Endothelial cell of umbilical vein (primary cell): ENCODE measurements at regions of chr9 and their contacts with region 1.

Region 1: DNA sequence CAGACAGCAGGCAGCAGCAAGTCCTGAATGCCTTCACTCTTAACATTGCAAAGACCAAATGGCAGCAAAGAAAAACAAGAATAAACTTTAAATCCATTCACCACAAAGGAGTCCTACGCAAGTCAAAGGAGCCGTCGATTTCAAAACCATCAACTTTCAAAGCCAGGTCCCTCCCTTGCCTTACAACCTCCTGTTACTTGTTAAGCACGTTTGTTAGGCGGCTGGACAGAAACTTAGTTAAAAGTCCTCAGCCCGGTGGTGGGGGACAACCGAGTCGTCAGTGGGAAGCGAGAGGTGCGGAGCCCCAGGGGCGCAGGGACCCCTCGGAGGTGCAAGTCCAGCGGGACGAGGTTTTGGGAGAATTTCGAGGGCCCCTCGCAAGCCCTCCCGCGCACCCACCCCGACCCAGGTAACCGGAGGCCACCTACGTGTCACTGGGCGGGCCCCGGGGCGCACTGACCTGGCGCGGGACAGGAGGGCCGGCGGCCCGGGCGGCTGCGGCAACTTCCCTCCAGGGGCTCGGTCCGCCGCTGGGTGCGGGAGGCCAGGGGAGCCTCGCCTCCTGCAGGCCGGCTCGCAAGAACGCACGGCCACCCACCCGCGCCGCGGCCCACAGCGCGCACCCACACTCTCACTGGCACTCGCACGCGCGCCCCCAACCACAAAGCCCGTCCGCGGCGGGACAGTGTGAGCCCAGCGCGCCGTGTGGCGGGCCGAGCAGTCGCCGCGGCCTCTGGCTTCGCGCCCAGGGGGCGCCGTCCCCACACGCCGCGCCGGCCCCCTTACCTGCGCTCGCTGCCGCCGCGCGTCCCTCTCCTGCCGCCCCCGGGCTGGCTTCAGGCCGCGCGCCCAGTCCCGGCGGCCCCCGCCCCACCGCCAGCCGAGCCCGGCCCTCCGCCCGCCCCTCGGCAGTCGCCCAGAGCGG is 627 bp downstream of the LPAR1 start:
- DNase-seq: no peak
- H3K4me3 ChIP-seq: peak overlapping the region; percentile 10 to 61 (median 46)
- H3K27ac ChIP-seq: no peak overlapping the region
- H3K4me1 ChIP-seq: peaks cover 21% of the 10 kb centered on the region
- H3K27me3 ChIP-seq: peaks cover 23 to 28% of the 10 kb centered on the region in 2 experiments
- CTCF ChIP-seq: no peak
- POLR2A ChIP-seq: no peak

Region 2: GRCh38 chr9:110638381-110638954 is 399.2 kb before region 1 on chr9:
- CTCF ChIA-PET with region 1: interaction called, 6 read pairs
- POLR2A ChIA-PET with region 1: no interaction called
- dilution Hi-C with region 1: no loop called
- intact Hi-C with region 1: loop called (anchors 5 kb)
- DNase-seq: peak; percentile 50
- H3K4me3 ChIP-seq: no peak overlapping the region
- H3K27ac ChIP-seq: no peak overlapping the region
- H3K4me1 ChIP-seq: no peaks in the 10 kb centered on the region
- H3K27me3 ChIP-seq: no peaks in the 10 kb centered on the region
- CTCF ChIP-seq: peak; percentile 9 to 17
- POLR2A ChIP-seq: no peak

Region 3: GRCh38 chr9:110650991-110651411 is 386.6 kb before region 1 on chr9:
- CTCF ChIA-PET with region 1: no interaction called
- POLR2A ChIA-PET with region 1: no interaction called
- dilution Hi-C with region 1: no loop called
- intact Hi-C with region 1: loop called (anchors 5 kb)
- DNase-seq: peak; percentile 80
- H3K4me3 ChIP-seq: no peak overlapping the region
- H3K27ac ChIP-seq: peak overlapping the region; percentile 53
- H3K4me1 ChIP-seq: peaks cover 6% of the 10 kb centered on the region
- H3K27me3 ChIP-seq: no peaks in the 10 kb centered on the region
- CTCF ChIP-seq: no peak
- POLR2A ChIP-seq: no peak

Region 4: GRCh38 chr9:110731437-110732028 is 306.1 kb before region 1 on chr9:
- CTCF ChIA-PET with region 1: no interaction called
- POLR2A ChIA-PET with region 1: no interaction called
- dilution Hi-C with region 1: no loop called
- intact Hi-C with region 1: no loop called
- DNase-seq: no peak
- H3K4me3 ChIP-seq: no peak overlapping the region
- H3K27ac ChIP-seq: no peak overlapping the region
- H3K4me1 ChIP-seq: no peaks in the 10 kb centered on the region
- H3K27me3 ChIP-seq: no peaks in the 10 kb centered on the region
- CTCF ChIP-seq: no peak
- POLR2A ChIP-seq: no peak

Region 5: DNA sequence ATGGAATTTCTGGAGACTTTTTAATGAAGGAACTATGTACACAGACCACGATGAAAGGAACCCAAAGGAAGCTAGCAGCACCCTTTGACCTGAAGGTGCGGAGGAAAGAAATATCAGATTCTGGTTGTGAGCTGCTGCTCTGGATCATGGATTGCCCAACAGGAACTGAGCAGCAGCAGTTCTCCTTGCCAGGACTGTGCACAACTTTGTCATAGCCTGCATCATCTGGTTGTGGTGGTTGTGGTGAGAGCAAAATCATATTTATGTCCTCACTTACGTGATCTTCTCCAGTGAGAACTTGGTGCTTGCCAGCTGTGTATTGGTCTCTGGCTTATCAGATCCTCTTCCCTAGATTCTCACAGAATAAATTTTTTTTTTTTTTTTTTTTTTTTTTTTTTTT is 71.3 kb after region 1 on chr9:
- CTCF ChIA-PET with region 1: no interaction called
- POLR2A ChIA-PET with region 1: no interaction called
- dilution Hi-C with region 1: no loop called
- intact Hi-C with region 1: no loop called
- DNase-seq: no peak
- H3K4me3 ChIP-seq: no peak overlapping the region
- H3K27ac ChIP-seq: no peak overlapping the region
- H3K4me1 ChIP-seq: no peaks in the 10 kb centered on the region
- H3K27me3 ChIP-seq: no peaks in the 10 kb centered on the region
- CTCF ChIP-seq: no peak
- POLR2A ChIP-seq: no peak

Region 6: DNA sequence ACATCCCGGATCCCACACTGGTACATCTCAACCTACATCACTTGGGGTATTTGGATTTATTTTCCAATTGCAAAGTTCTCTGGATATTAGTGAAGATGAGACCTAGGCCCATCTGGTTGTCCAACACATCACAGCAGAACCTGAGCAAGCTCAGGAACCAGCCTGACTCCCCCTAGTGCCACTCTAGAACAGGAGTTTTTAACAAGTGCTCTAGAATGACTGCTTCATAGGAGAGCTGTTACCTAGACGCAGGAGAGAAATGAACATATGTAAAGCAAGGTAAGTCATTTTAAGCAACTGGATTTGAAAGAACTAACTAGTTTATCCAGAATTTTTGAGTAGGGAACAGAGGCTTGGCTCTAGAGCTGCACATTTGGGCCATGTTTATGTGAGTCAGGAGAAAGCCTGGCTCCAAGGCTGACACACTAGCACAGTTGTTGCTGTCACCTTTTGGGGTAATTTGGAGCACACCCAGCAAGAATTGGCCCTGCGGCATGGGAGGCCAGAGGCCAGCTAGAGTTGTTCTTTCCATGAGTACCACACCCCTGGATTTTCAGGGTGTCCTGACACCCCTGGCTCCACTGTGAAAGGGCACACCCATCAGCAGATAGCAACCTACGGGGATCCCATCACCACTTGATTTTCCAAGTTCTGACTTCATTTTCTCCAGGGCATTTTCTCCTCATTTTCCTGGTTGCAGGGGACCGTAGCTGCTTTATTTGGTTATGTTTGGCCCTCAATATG is 111.5 kb after region 1 on chr9:
- CTCF ChIA-PET with region 1: no interaction called
- POLR2A ChIA-PET with region 1: no interaction called
- dilution Hi-C with region 1: no loop called
- intact Hi-C with region 1: loop called (anchors 5 kb)
- DNase-seq: no peak
- H3K4me3 ChIP-seq: no peak overlapping the region
- H3K27ac ChIP-seq: no peak overlapping the region
- H3K4me1 ChIP-seq: no peaks in the 10 kb centered on the region
- H3K27me3 ChIP-seq: no peaks in the 10 kb centered on the region
- CTCF ChIP-seq: no peak
- POLR2A ChIP-seq: no peak